ENCODE measurements at regions of chr19 and their contacts with region 1.

Region 1: DNA sequence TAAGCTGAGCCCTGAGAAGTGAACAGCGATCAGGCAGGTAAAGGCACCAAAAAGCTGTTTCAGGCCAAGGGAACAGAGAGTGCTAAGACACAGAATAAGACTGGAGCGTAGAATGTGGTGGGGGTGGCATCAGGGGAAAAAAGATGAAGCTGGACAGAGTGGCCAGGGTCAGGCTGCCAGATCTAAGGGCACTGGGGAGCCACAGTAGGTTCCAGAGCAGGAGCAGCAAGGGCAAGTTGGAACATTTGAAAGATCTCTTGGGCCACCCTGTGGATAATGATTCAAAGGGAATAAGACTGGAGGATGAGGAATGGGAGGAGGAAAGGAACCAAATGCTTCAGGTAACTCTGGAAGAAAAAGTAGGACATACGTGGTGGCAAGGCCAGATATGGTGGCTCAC is 6.5 kb upstream of the PLIN3 start:
- DNase-seq: no peak
- H3K4me3 ChIP-seq: no peak overlapping the region
- H3K27ac ChIP-seq: no peak overlapping the region
- H3K4me1 ChIP-seq: peaks cover 0 to 21% (median 15%) of the 10 kb centered on the region in 4 donors
- H3K27me3 ChIP-seq: peaks cover 0 to 12% (median 0%) of the 10 kb centered on the region in 4 donors
- CTCF ChIP-seq: no peak
- EP300 ChIP-seq: no peak
- POLR2A ChIP-seq: no peak

Region 2: GRCh38 chr19:4909897-4910593 is 36.1 kb after region 1 on chr19:
- intact Hi-C with region 1: loop called (anchors 2 kb)
- DNase-seq: peak; percentile 98
- H3K4me3 ChIP-seq: peak overlapping the region; percentile 62 to 93 (median 72)
- H3K27ac ChIP-seq: no peak overlapping the region
- H3K4me1 ChIP-seq: peaks cover 17 to 34% (median 32%) of the 10 kb centered on the region in 4 donors
- H3K27me3 ChIP-seq: peaks cover 0 to 24% (median 8%) of the 10 kb centered on the region in 4 donors
- CTCF ChIP-seq: no peak
- EP300 ChIP-seq: no peak
- POLR2A ChIP-seq: no peak